RWPE1 (cell line): ENCODE measurements at regions of chr2 and their contacts with region 1.

Region 1: GRCh38 chr2:28594289-28595108 is 98.6 kb downstream of the PLB1 start:
- DNase-seq: peak; percentile 88
- H3K27ac ChIP-seq: peak overlapping the region; percentile 85
- CTCF ChIP-seq: peak; percentile 83

Region 2: DNA sequence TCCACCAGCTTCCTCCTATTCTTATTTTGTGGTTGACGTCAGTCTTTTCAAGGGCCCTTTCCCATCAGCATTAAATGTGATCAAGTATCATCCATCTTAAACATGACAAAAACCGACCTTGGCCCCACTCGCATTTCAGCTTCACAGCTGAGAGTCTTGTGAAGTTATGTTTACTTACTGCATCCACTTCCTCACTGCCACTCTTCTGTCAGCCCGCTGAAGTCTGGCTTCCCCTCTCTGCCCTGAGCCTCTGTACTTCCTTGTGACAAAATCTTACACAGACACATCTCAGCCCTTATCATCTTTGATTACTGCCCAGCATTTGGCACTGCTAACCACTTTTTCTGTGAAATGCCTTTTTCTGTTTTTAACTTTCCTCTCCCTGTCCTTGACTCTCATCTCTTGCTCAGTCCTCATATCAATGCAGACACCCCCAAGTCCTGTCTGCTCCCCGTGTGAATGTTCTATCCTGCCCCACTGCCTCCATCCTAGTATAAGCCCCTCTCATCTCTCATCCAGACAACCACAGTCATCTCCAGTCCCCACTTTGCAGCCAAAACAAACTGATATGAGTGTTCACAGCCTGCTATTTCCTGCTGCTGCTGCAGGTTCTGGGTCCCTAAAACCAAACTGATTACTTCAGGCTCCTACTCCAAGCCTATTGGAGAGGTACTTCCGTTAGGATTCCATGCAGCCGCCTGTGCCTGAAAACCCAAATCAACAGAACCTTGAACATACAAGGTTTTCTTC is 170.5 kb before region 1 on chr2:
- CTCF ChIA-PET with region 1: no interaction called
- POLR2A ChIA-PET with region 1: no interaction called
- DNase-seq: no peak
- H3K27ac ChIP-seq: 0 out of 2 replicates have a peak overlapping the region, but pooled peaks have one; percentile 6
- CTCF ChIP-seq: no peak

Region 3: GRCh38 chr2:28583899-28584553 is 10.5 kb before region 1 on chr2:
- CTCF ChIA-PET with region 1: interaction called, 23 read pairs
- POLR2A ChIA-PET with region 1: no interaction called
- DNase-seq: peak; percentile 98
- H3K27ac ChIP-seq: peak overlapping the region; percentile 98
- CTCF ChIP-seq: no peak

Region 4: DNA sequence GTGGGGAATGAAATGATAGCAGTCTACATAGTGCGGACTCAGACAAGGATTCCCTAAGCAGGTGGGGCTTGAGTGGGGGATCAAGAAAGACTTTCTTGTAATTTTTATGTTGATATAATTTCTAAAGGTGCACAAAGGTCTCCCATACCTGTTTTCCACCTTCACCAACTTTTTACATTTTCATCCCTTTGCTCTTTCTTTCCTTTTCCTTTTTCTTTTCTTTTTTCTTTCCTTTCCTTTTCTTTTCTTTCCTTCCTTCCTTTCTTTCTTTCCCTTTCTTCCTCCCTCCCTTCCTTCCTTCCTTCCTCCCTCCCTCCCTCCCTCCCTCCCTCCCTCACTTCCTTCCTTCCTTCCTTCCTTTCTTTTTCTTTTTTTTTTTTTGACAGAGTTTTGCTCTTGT is 285.7 kb after region 1 on chr2:
- CTCF ChIA-PET with region 1: no interaction called
- POLR2A ChIA-PET with region 1: no interaction called
- DNase-seq: no peak
- H3K27ac ChIP-seq: no peak overlapping the region
- CTCF ChIP-seq: no peak